AG04450 (cell line): ENCODE measurements at regions of chr6 and their contacts with region 1.

Region 1: DNA sequence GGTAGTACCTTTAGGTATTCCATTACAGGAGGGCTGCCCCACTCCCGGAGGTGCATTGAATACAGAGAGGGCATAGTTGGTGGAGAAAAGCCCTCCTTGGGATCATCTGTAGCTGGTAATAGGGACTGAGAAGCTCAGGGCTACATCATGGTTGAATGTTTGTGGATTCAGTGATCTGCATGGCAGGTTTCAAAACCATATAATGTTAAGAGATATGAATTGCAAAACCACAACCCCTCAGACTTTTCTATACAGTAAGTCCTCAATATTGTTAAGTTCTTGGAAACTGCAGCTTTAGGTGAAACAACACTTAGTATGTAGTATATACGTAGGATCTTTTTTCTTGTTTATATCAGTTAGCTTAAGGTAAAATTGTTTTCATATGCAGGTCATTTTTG is 11.3 kb downstream of the TULP4 start:
- DNase-seq: no peak
- H3K4me3 ChIP-seq: no peak overlapping the region
- H3K27ac ChIP-seq: no peak overlapping the region
- H3K27me3 ChIP-seq: no peaks in the 10 kb centered on the region
- CTCF ChIP-seq: no peak

Region 2: GRCh38 chr6:158805698-158806377 is 482.3 kb after region 1 on chr6:
- CTCF ChIA-PET with region 1: no interaction called
- POLR2A ChIA-PET with region 1: interaction called, 10 read pairs
- DNase-seq: no peak
- H3K4me3 ChIP-seq: no peak overlapping the region
- H3K27ac ChIP-seq: no peak overlapping the region
- H3K27me3 ChIP-seq: no peaks in the 10 kb centered on the region
- CTCF ChIP-seq: no peak